IMR-90 (cell line): ENCODE measurements at regions of chr7 and their contacts with region 1.

Region 1: DNA sequence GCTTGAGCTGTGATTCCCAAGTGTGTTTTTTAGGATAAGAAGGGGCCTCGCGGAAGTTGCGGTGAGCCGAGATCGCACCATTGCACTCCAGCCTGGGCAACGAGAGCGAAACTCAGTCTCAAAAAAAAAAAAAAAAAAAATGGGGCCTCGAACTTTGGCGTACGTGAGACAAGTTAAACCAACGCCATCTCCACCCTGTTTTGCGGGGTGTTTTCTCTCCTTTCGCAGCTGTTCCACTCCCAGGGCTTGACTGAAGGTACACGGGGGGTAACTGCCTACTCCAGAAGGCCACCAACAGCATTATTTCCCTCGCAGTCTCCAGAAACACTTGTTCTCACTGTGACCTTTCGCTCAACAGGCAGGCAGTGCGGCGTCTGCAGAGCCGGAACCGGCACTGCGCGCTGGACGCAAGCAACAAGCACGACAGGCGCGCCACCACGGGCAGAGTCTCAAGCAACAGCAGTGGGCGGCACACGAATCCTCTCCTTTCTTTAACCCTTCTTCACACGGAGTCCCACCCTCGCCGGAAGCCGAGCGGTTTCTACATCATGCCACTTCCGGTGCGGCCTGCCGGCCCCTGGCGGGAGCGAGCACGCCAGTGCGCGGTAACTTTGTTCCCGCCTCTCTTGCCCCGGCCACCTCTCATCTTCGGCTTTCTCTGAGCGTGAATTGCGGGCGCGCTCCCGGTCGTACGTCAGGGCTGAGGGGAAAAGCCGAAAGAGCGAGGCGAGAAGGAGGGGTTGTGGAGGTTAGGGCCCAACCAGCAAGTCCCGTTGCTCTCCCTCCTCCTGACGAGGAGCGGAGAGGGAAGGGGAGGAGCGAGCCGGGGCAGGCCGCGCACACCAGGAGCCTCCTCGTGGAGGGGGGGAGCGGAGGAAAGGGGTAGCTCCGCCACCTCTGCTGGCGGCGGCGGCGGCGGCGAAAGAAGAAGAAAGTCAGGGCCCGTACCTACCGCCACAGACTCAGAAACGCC is 814 bp upstream of the CDK13 start:
- DNase-seq: peak; percentile 100
- ATAC-seq: peak; percentile 90
- H3K4me3 ChIP-seq: peak overlapping the region; percentile 90
- H3K27ac ChIP-seq: peak overlapping the region; percentile 91
- H3K4me1 ChIP-seq: peaks cover 4% of the 10 kb centered on the region; the same call in 1 of the 2 replicates
- H3K27me3 ChIP-seq: no peaks in the 10 kb centered on the region
- CTCF ChIP-seq: no peak; the same call in 1 of the 2 replicates
- POLR2A ChIP-seq: peak; percentile 90
- RAD21 ChIP-seq: no peak

Region 2: DNA sequence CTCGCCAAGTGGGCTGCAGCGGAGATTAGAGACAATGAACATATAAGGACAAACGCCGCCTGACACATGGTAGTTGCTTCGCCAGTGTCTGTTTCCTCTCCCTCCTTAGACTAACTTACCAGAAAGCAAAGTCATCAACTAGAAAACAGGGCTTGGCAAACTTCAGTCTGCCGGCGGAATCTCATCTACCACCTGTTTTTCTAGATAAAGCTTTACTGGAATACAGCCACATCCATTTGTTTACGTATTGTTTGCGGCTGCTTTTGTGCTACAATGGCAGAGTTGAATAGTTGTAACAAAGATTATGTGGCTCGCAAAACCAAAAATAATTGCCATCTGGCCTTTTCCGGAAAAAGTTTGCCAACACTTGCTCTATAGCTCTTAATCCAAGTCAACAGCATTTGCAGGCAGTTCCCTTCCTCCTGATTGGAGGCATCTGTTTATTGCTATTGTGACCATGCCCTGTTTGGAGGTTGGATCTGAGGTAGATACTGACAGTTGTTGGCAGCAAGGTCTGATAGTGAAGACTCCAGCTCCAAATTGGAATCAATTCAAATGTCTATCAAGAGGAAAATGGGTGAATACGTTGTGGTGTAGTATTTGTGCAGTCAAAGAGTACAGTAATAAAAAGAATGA is 710.9 kb before region 1 on chr7:
- CTCF ChIA-PET with region 1: no interaction called
- POLR2A ChIA-PET with region 1: no interaction called
- dilution Hi-C with region 1: no loop called
- in situ Hi-C with region 1: no loop called
- intact Hi-C with region 1: no loop called
- DNase-seq: no peak
- ATAC-seq: no peak
- H3K4me3 ChIP-seq: no peak overlapping the region
- H3K27ac ChIP-seq: no peak overlapping the region
- H3K4me1 ChIP-seq: no peaks in the 10 kb centered on the region
- H3K27me3 ChIP-seq: no peaks in the 10 kb centered on the region; the same call in 1 of the 2 replicates
- CTCF ChIP-seq: no peak
- POLR2A ChIP-seq: no peak
- RAD21 ChIP-seq: no peak

Region 3: GRCh38 chr7:39894904-39895303 is 54.3 kb before region 1 on chr7:
- CTCF ChIA-PET with region 1: no interaction called
- POLR2A ChIA-PET with region 1: no interaction called
- dilution Hi-C with region 1: no loop called
- in situ Hi-C with region 1: no loop called
- intact Hi-C with region 1: loop called (anchors 5 kb)
- DNase-seq: peak; percentile 13
- ATAC-seq: 0 out of 2 replicates have a peak, but pooled peaks have one; percentile 24
- H3K4me3 ChIP-seq: no peak overlapping the region
- H3K27ac ChIP-seq: no peak overlapping the region
- H3K4me1 ChIP-seq: no peaks in the 10 kb centered on the region
- H3K27me3 ChIP-seq: peaks cover 51% of the 10 kb centered on the region
- CTCF ChIP-seq: no peak
- POLR2A ChIP-seq: no peak
- RAD21 ChIP-seq: no peak

Region 4: DNA sequence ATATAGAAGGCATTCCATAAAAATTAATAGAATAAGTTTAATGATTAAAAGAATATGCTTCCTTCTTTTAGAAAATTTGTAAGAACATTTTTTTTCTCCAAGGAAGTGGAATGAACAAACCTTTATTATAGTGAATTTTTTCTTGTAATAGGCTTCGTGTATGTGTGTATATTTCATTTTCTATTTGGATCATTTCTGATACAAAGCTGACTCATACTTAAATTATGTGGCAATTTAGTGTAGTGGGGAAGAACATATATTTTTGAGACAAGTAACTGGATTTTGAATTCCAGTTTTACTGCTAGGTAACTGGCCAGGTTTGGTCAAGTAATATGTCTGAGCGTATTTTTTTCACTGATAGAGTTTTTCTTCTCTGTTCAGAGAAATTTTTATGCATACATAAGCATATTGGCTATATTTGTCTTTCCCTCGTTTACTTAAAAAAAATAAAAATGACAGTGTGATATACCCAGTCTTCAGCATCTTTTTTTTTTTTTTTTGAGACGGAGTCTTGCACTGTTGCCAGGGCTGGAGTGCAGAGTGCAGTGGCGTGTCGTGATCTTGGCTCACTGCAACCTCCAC is 51.6 kb after region 1 on chr7:
- CTCF ChIA-PET with region 1: no interaction called
- POLR2A ChIA-PET with region 1: no interaction called
- dilution Hi-C with region 1: no loop called
- in situ Hi-C with region 1: loop called (anchors 5 kb)
- intact Hi-C with region 1: no loop called
- DNase-seq: peak; percentile 59
- ATAC-seq: peak; percentile 61; the same call in 1 of the 2 replicates
- H3K4me3 ChIP-seq: no peak overlapping the region
- H3K27ac ChIP-seq: no peak overlapping the region
- H3K4me1 ChIP-seq: peaks cover 3% of the 10 kb centered on the region; the same call in 1 of the 2 replicates
- H3K27me3 ChIP-seq: no peaks in the 10 kb centered on the region
- CTCF ChIP-seq: no peak
- POLR2A ChIP-seq: no peak
- RAD21 ChIP-seq: no peak

Region 5: GRCh38 chr7:40057292-40057691 is 108.0 kb after region 1 on chr7:
- CTCF ChIA-PET with region 1: interaction called, 8 read pairs
- POLR2A ChIA-PET with region 1: no interaction called
- dilution Hi-C with region 1: no loop called
- in situ Hi-C with region 1: no loop called
- intact Hi-C with region 1: loop called (anchors 1 kb)
- DNase-seq: peak; percentile 20
- ATAC-seq: no peak
- H3K4me3 ChIP-seq: no peak overlapping the region
- H3K27ac ChIP-seq: no peak overlapping the region
- H3K4me1 ChIP-seq: 0 out of 2 replicates have a peak, but pooled peaks cover 2% of the 10 kb centered on the region
- H3K27me3 ChIP-seq: no peaks in the 10 kb centered on the region
- CTCF ChIP-seq: no peak
- POLR2A ChIP-seq: no peak
- RAD21 ChIP-seq: no peak